ENCODE measurements at regions of chr1 and their contacts with region 1.

Region 1: GRCh38 chr1:204494281-204495077 is at the start of gene PIK3C2B:
- DNase-seq: peak; percentile 90 to 92
- H3K4me3 ChIP-seq: peak within 1 kb of the TSS; percentile 98
- H3K4me3 Mint-ChIP-seq: peak within 1 kb of the TSS; percentile 92
- H3K27ac Mint-ChIP-seq: peak within 1 kb of the TSS; percentile 94
- H3K4me1 ChIP-seq: peaks cover 14% of the 10 kb centered on the region
- H3K4me1 Mint-ChIP-seq: peaks cover 21% of the 10 kb centered on the region
- H3K27me3 ChIP-seq: no peaks in the 10 kb centered on the region
- H3K27me3 Mint-ChIP-seq: no peaks in the 10 kb centered on the region
- CTCF ChIP-seq: peak; percentile 50 to 55
- total RNA-seq, gene PIK3C2B: 24.7 and 28.5 TPM in 2 replicates

Region 2: GRCh38 chr1:204150702-204151551 is 343.6 kb before region 1 on chr1:
- CTCF ChIA-PET with region 1: no interaction called
- POLR2A ChIA-PET with region 1: no interaction called
- intact Hi-C with region 1: no loop called
- DNase-seq: no peak
- H3K4me3 ChIP-seq: peak overlapping the region; percentile 59
- H3K4me3 Mint-ChIP-seq: peak overlapping the region; percentile 71
- H3K27ac Mint-ChIP-seq: no peak overlapping the region
- H3K4me1 ChIP-seq: peaks cover 7% of the 10 kb centered on the region
- H3K4me1 Mint-ChIP-seq: peaks cover under 1% of the 10 kb centered on the region
- H3K27me3 ChIP-seq: no peaks in the 10 kb centered on the region
- H3K27me3 Mint-ChIP-seq: no peaks in the 10 kb centered on the region
- CTCF ChIP-seq: no peak

Region 3: DNA sequence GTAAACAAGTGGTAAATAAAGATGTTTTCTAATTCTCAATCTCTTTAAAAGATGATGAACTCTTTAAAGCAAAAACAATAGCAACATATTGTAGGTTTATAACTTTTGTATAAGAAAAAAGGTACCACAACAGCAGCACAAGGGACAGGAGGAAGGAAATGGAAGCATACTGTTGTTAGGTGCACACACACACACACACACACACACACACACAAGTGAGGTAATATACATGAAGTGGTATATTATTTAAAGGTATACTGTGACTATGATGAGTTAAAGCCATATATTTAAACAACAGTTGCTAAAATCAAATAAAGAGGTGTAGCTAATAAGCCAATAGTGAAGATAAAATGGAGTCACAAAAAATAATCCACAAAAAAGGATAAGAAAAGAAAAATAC is 102.8 kb before region 1 on chr1:
- CTCF ChIA-PET with region 1: no interaction called
- POLR2A ChIA-PET with region 1: no interaction called
- intact Hi-C with region 1: no loop called
- DNase-seq: no peak
- H3K4me3 ChIP-seq: no peak overlapping the region
- H3K4me3 Mint-ChIP-seq: no peak overlapping the region
- H3K27ac Mint-ChIP-seq: no peak overlapping the region
- H3K4me1 ChIP-seq: no peaks in the 10 kb centered on the region
- H3K4me1 Mint-ChIP-seq: no peaks in the 10 kb centered on the region
- H3K27me3 ChIP-seq: no peaks in the 10 kb centered on the region
- H3K27me3 Mint-ChIP-seq: no peaks in the 10 kb centered on the region
- CTCF ChIP-seq: no peak

Region 4: GRCh38 chr1:204431310-204432165 is 62.9 kb before region 1 on chr1:
- CTCF ChIA-PET with region 1: interaction called, 17 read pairs
- POLR2A ChIA-PET with region 1: no interaction called
- intact Hi-C with region 1: loop called (anchors 1 kb)
- DNase-seq: peak; percentile 75 to 80
- H3K4me3 ChIP-seq: no peak overlapping the region
- H3K4me3 Mint-ChIP-seq: no peak overlapping the region
- H3K27ac Mint-ChIP-seq: peak overlapping the region; percentile 4
- H3K4me1 ChIP-seq: peaks cover 5% of the 10 kb centered on the region; the same call in 1 of the 2 replicates
- H3K4me1 Mint-ChIP-seq: peaks cover 7% of the 10 kb centered on the region
- H3K27me3 ChIP-seq: no peaks in the 10 kb centered on the region
- H3K27me3 Mint-ChIP-seq: no peaks in the 10 kb centered on the region
- CTCF ChIP-seq: peak; percentile 94 to 97

Region 5: DNA sequence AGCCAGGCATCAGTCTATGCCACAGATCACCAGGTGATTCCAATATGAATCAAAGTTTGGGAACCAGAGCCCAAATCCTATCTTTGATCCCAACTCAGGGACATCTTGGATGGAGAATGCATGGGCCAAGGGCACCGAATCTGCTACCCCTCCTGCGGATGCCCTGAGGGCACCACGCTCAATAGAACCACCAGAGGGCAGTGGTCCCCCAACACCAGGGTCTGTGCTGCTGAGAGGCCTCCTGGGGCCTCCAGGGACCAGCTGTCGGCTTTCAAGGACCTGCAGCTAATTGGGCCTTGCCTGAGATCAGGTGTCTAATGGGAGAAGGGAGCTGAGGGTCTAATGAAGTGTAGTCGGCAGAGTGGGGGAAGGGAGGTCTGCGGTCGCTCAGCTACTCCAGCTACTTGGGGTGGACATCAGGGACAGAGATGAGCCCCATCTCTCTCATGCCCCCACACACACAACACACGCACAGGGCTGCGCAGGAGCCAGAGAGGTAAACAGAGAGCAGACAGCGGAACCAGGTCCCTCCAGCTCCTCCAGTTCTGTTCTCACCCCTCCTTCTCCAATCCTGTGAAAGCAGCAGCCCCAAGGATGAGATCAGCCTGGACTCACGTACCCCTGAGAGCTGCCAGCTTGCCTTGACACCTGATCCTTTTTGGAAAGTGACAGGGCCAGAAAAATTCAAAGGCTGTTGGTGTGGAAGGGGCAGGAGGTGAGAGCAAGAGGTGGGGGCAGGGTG is 47.9 kb before region 1 on chr1:
- CTCF ChIA-PET with region 1: interaction called, 52 read pairs
- POLR2A ChIA-PET with region 1: interaction called, 8 read pairs
- intact Hi-C with region 1: loop called (anchors 2 kb)
- DNase-seq: peak; percentile 75 to 81
- H3K4me3 ChIP-seq: no peak overlapping the region
- H3K4me3 Mint-ChIP-seq: no peak overlapping the region
- H3K27ac Mint-ChIP-seq: peak overlapping the region; percentile 52
- H3K4me1 ChIP-seq: peaks cover 26% of the 10 kb centered on the region
- H3K4me1 Mint-ChIP-seq: peaks cover 13% of the 10 kb centered on the region
- H3K27me3 ChIP-seq: no peaks in the 10 kb centered on the region
- H3K27me3 Mint-ChIP-seq: no peaks in the 10 kb centered on the region
- CTCF ChIP-seq: peak; percentile 74 to 90

Region 6: GRCh38 chr1:204480515-204480914 is 14.0 kb before region 1 on chr1:
- CTCF ChIA-PET with region 1: interaction called, 22 read pairs
- POLR2A ChIA-PET with region 1: interaction called, 4 read pairs
- intact Hi-C with region 1: loop called (anchors 2 kb)
- DNase-seq: no peak
- H3K4me3 ChIP-seq: no peak overlapping the region
- H3K4me3 Mint-ChIP-seq: no peak overlapping the region
- H3K27ac Mint-ChIP-seq: no peak overlapping the region
- H3K4me1 ChIP-seq: peaks cover 14% of the 10 kb centered on the region; the same call in 1 of the 2 replicates
- H3K4me1 Mint-ChIP-seq: peaks cover 16% of the 10 kb centered on the region
- H3K27me3 ChIP-seq: no peaks in the 10 kb centered on the region
- H3K27me3 Mint-ChIP-seq: no peaks in the 10 kb centered on the region
- CTCF ChIP-seq: no peak

Region 7: DNA sequence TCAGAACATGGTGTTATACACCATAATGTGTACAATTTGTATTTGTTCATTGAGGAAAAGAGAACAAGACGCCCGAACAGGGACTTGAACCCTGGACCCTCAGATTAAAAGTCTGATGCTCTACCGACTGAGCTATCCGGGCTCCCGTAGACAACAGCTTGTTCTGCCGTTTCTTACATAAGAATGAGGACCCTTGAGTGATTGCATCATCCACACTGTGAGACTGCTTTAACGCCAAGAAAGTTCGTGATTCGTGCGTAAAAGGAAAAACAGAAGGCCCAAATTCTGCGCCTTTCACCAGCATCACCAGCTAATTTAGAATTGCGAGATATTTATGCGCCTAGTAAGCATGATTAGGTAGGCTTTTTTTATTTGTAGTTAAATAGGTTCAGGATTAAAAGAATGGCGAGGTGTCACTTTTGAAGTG is 12.5 kb after region 1 on chr1:
- CTCF ChIA-PET with region 1: interaction called, 20 read pairs
- POLR2A ChIA-PET with region 1: interaction called, 19 read pairs
- intact Hi-C with region 1: loop called (anchors 1 kb)
- DNase-seq: peak; percentile 83 to 91
- H3K4me3 ChIP-seq: peak overlapping the region; percentile 58
- H3K4me3 Mint-ChIP-seq: peak overlapping the region; percentile 99
- H3K27ac Mint-ChIP-seq: peak overlapping the region; percentile 98
- H3K4me1 ChIP-seq: peaks cover 4% of the 10 kb centered on the region; the same call in 1 of the 2 replicates
- H3K4me1 Mint-ChIP-seq: peaks cover 20% of the 10 kb centered on the region
- H3K27me3 ChIP-seq: no peaks in the 10 kb centered on the region
- H3K27me3 Mint-ChIP-seq: peaks cover 8% of the 10 kb centered on the region
- CTCF ChIP-seq: no peak

Region 8: DNA sequence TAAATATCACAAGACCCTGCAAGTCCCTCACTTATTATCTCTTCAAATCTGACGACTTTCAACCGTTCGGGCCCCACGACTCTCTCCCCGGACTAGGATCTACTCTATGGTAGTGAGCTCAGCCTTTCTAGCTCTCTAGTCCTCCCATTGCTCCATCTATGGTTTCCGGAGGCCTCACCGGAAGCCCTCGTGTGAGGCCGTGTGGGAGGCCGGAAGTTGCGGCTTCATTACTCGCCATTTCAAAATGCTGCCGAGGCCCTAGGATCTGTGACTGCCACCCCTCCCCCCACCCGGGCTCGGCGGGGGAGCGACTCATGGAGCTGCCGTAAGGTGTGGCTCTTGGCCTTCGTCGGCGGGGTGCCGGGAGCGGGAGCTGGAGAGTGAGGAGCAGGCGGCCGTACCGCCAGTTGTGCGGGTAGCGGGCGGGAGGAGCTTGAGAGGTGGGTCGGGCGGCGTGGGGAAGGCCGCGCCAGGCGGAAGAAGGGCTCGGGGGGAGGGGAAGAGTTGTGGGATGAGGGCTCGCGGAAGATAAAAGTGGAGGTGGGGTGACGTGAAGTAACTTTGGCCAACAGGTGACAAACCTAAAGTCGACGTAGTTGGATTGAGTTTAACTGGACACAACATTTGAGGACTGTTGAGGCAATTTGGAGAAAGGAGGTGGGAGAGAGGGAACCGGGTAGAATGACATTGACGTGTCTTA is 21.9 kb after region 1 on chr1 and contains the start of gene MDM4:
- CTCF ChIA-PET with region 1: interaction called, 6 read pairs
- POLR2A ChIA-PET with region 1: interaction called, 13 read pairs
- intact Hi-C with region 1: no loop called
- DNase-seq: peak; percentile 95 to 96
- H3K4me3 ChIP-seq: peak within 1 kb of the TSS; percentile 49
- H3K4me3 Mint-ChIP-seq: no peak within 1 kb of the TSS
- H3K27ac Mint-ChIP-seq: no peak within 1 kb of the TSS
- H3K4me1 ChIP-seq: no peaks in the 10 kb centered on the region
- H3K4me1 Mint-ChIP-seq: peaks cover 7% of the 10 kb centered on the region
- H3K27me3 ChIP-seq: no peaks in the 10 kb centered on the region
- H3K27me3 Mint-ChIP-seq: no peaks in the 10 kb centered on the region
- CTCF ChIP-seq: no peak
- total RNA-seq, gene MDM4: 56.5 and 58.9 TPM in 2 replicates

Measured in Caco-2 (cell line).